MCF 10A (cell line): ENCODE measurements at regions of chr4 and their contacts with region 1.

Region 1: DNA sequence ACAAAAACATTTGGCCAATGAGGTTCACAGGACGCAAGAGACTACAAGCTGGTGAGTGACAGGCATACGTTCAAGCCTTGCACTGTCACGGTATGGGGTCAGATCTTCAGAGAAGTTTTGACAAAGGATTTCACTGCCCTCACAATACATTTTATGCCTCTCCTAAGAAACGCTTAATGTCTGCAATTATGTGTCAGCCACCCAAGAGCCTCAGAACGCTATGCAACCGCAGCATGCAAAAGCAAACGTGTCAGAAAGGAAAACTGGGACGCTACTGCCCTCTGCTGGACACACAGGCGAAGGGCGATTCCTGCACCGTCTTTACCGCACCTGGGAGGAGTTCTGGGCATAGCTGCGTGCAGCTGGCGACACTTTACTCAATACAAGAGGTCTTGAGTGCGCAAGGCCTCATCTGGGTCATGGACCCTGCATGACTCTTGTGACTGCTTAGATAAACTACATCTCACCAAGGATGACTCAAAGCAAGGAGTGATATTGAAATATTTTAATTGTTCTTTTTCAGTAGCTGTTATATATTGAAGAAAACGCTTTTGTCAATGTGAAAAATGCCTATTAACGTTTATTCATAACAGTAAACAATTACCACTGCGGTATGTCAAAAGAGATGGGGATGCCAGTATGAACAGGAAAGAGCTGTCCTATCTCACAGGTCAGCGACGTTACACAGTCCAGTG is 147.6 kb upstream of the FRG1 start:
- DNase-seq: peak; percentile 57
- H3K4me3 Mint-ChIP-seq: peak overlapping the region; percentile 45
- H3K27ac Mint-ChIP-seq: no peak overlapping the region
- H3K4me1 Mint-ChIP-seq: peaks cover 10% of the 10 kb centered on the region
- H3K27me3 Mint-ChIP-seq: no peaks in the 10 kb centered on the region
- CTCF ChIP-seq: peak; percentile 93

Region 2: GRCh38 chr4:188372826-188373225 is 1420.2 kb before region 1 on chr4:
- CTCF ChIA-PET with region 1: no interaction called
- POLR2A ChIA-PET with region 1: no interaction called
- intact Hi-C with region 1: loop called (anchors 10 kb)
- DNase-seq: peak; percentile 59
- H3K4me3 Mint-ChIP-seq: no peak overlapping the region
- H3K27ac Mint-ChIP-seq: peak overlapping the region; percentile 68
- H3K4me1 Mint-ChIP-seq: peaks cover 5% of the 10 kb centered on the region
- H3K27me3 Mint-ChIP-seq: no peaks in the 10 kb centered on the region
- CTCF ChIP-seq: peak; percentile 53

Region 3: GRCh38 chr4:188971125-188971524 is 821.9 kb before region 1 on chr4:
- CTCF ChIA-PET with region 1: interaction called, 14 read pairs
- POLR2A ChIA-PET with region 1: no interaction called
- intact Hi-C with region 1: no loop called
- DNase-seq: peak; percentile 57
- H3K4me3 Mint-ChIP-seq: no peak overlapping the region
- H3K27ac Mint-ChIP-seq: no peak overlapping the region
- H3K4me1 Mint-ChIP-seq: no peaks in the 10 kb centered on the region
- H3K27me3 Mint-ChIP-seq: no peaks in the 10 kb centered on the region
- CTCF ChIP-seq: peak; percentile 36

Region 4: GRCh38 chr4:189436207-189436606 is 356.9 kb before region 1 on chr4:
- CTCF ChIA-PET with region 1: interaction called, 3 read pairs
- POLR2A ChIA-PET with region 1: no interaction called
- intact Hi-C with region 1: loop called (anchors 10 kb)
- DNase-seq: peak; percentile 9
- H3K4me3 Mint-ChIP-seq: no peak overlapping the region
- H3K27ac Mint-ChIP-seq: no peak overlapping the region
- H3K4me1 Mint-ChIP-seq: peaks cover 6% of the 10 kb centered on the region
- H3K27me3 Mint-ChIP-seq: no peaks in the 10 kb centered on the region
- CTCF ChIP-seq: no peak

Region 5: DNA sequence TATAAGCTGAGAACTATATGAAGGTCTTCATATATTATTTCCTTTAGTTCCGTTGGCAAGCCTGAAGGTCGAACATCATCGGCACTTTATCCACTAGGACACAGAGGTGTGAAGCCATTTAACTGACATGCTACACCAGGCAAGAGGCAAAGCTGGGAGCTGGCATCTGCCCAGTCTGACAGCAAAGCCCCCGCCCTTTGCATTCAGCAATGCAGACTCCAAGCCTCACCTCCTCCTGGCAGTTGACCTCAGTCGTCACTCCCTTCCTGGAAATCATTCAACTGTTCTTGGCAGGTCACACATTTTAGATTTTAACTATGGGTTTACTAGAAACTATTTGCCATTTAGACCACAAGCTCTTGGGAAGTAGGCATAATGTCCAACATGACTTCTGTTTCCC is 11.8 kb after region 1 on chr4:
- CTCF ChIA-PET with region 1: interaction called, 23 read pairs
- POLR2A ChIA-PET with region 1: no interaction called
- intact Hi-C with region 1: no loop called
- DNase-seq: no peak
- H3K4me3 Mint-ChIP-seq: no peak overlapping the region
- H3K27ac Mint-ChIP-seq: no peak overlapping the region
- H3K4me1 Mint-ChIP-seq: no peaks in the 10 kb centered on the region
- H3K27me3 Mint-ChIP-seq: no peaks in the 10 kb centered on the region
- CTCF ChIP-seq: no peak

Region 6: DNA sequence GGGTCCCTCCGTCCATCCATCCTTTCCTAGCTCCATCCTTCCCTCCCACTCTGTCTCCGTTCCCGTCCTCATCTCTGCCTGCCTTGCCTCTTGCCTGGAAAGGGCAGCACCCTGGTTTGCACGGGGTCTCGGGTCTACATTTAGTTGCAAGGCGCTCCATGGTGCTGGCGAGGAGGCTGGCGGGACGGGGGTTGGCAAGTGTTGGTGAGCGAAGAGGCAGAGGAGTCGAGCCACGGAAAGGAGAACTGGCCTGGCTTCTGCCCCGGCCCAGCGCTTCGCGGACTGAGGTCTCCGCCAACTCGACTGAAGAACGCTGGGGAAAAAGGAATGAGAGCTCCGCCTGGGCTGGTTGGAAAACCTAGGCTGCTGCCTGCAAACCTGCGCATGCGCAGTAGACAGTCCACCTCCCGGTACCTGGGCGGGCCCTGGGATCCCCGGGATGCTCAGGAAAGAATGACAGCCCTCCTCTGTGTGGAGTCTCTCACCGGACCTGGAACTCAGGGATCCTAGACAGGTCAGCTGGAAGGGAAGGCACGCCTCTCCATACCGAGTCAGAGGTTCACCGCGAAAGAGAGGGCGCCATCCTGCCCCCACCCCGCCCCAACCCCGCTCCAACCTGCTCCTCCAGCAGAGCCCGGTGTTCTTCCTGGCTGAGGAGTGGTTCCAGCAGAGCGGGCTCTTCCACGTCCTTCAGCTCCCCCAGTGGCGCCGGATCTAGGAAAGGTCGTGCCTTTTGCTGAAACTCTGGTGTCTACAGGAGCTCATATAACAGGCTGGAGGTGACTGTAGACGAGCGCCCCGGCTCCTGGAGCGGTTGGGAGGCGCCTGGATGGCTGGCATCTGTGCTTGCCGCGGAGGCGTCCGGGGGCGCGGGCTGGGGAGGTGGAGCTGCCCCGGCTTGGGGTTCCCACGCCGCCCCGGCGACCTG is 228.0 kb after region 1 on chr4:
- CTCF ChIA-PET with region 1: no interaction called
- POLR2A ChIA-PET with region 1: no interaction called
- intact Hi-C with region 1: no loop called
- DNase-seq: peak; percentile 7
- H3K4me3 Mint-ChIP-seq: peak overlapping the region; percentile 66
- H3K27ac Mint-ChIP-seq: no peak overlapping the region
- H3K4me1 Mint-ChIP-seq: peaks cover 12% of the 10 kb centered on the region
- H3K27me3 Mint-ChIP-seq: peaks cover 11% of the 10 kb centered on the region
- CTCF ChIP-seq: no peak